Naive thymus-derived CD4-positive, alpha-beta T cell (primary cell): ENCODE measurements at regions of chr11 and their contacts with region 1.

Region 1: DNA sequence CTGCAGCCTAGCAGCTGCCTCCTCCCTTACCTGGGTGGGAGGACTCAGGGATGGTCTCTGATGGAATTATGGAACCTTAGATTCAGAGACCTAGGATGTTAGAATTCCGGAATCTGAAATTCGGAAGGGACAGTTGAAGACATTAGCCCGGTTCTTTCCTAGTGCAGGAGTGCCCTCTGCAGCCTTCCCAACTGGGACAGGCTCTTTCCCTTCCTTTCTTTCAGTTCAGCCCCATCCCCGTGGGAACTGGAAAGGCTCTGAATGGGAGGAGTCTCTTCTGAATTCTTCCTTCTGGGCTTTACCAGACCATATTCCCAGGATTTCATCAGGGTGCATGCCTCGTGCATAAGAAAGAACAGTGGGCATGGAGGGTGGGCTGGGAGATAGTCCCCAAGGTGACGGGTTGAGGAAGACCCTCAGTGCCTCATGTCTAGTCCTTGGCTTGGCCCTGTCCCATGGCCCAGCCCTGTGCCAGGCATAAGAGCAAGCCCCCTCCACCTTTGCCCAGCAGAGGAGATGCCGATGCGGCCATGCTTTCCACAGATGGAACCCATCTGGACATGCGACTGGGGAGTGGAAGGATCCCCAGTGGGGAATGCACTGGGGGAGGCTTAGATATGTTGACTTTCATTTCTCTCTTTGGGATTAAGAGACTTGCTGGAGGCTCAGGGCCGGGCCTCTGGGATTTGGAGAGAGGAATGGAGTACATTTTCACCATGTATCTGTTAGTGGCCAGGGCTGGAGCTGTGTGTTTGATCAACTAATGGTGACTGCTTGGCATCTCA is 14.4 kb downstream of the DNAJB13 start:
- DNase-seq: no peak
- ATAC-seq: no peak
- H3K4me3 ChIP-seq: no peak overlapping the region
- H3K4me3 Mint-ChIP-seq: peak overlapping the region in 5 of 10 donors; percentile 18 to 59 (median 47)
- H3K27ac ChIP-seq: no peak overlapping the region
- H3K27ac Mint-ChIP-seq: peak overlapping the region in 8 of 9 donors; percentile 36 to 86 (median 74)
- H3K4me1 ChIP-seq: peaks cover 41 to 50% of the 10 kb centered on the region in 2 donors
- H3K4me1 Mint-ChIP-seq: peaks cover 29 to 57% (median 44%) of the 10 kb centered on the region in 7 donors
- H3K27me3 ChIP-seq: no peaks in the 10 kb centered on the region
- H3K27me3 Mint-ChIP-seq: no peaks in the 10 kb centered on the region

Region 2: GRCh38 chr11:73889019-73889418 is 76.2 kb before region 1 on chr11:
- CTCF ChIA-PET with region 1: no interaction called
- POLR2A ChIA-PET with region 1: no interaction called
- intact Hi-C with region 1: no loop called
- DNase-seq: no peak
- ATAC-seq: no peak
- H3K4me3 ChIP-seq: no peak overlapping the region
- H3K4me3 Mint-ChIP-seq: no peak overlapping the region
- H3K27ac ChIP-seq: no peak overlapping the region
- H3K27ac Mint-ChIP-seq: peak overlapping the region in 3 of 9 donors; percentile 14 to 32 (median 29)
- H3K4me1 ChIP-seq: no peaks in the 10 kb centered on the region
- H3K4me1 Mint-ChIP-seq: peaks cover 4 to 12% (median 6%) of the 10 kb centered on the region in 7 donors
- H3K27me3 ChIP-seq: no peaks in the 10 kb centered on the region
- H3K27me3 Mint-ChIP-seq: no peaks in the 10 kb centered on the region

Region 3: GRCh38 chr11:74004759-74005615 is 39.7 kb after region 1 on chr11:
- CTCF ChIA-PET with region 1: interaction called, 11 read pairs
- POLR2A ChIA-PET with region 1: interaction called, 1,403 read pairs
- intact Hi-C with region 1: loop called (anchors 1 to 2 kb)
- DNase-seq: peak; percentile 55 to 94 (median 91)
- ATAC-seq: peak; percentile 100
- H3K4me3 ChIP-seq: peak overlapping the region; percentile 44
- H3K4me3 Mint-ChIP-seq: peak overlapping the region; percentile 74 to 91 (median 83)
- H3K27ac ChIP-seq: peak overlapping the region; percentile 75
- H3K27ac Mint-ChIP-seq: peak overlapping the region; percentile 92 to 99 (median 96)
- H3K4me1 ChIP-seq: peaks cover 60 to 62% of the 10 kb centered on the region in 2 donors
- H3K4me1 Mint-ChIP-seq: peaks cover 48 to 85% (median 78%) of the 10 kb centered on the region in 7 donors
- H3K27me3 ChIP-seq: no peaks in the 10 kb centered on the region
- H3K27me3 Mint-ChIP-seq: no peaks in the 10 kb centered on the region

Region 4: DNA sequence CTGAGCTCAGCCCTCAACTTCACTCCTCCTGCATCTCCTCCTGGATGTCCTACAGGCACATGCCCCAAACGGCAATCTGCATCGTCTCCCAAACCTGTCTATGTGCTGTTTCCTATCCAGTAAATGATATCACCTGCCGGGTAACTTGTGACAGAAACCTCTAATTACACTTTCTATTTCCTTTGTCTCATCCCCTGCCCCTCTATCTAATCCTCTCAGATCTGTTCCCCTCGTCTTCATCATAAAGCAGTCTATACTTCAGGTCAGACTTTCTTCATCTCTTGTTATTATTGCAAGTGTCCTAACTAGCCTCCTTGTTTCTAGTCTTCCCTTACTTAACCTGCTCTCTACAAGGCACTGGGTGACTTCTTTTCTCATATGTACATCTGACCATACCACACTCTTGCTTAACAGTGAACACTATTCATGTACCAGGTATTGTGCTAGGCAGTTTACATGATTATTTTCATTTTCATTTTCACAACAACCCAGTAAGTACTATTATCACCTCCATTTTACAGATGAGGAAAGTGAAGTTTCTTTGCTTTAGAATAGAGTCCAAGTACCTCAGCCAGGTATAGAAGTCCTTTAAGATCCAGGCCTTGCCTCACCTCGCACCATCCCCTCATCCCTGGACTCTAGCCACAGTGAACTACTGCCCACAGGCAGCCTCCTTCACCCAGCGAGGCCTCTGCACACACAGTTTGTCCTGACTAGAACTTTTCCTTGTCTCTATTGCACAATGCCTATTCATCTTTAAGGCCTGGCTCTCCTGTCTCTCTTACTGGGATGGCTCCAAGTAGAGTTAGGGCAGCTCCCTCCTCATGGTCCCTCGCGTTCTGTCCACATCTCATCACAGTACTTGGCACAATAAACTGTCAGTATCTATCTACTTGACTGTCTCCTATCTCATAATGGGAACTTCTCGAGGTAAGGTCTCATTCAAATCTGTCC is 65.7 kb after region 1 on chr11:
- CTCF ChIA-PET with region 1: interaction called, 50 read pairs
- POLR2A ChIA-PET with region 1: interaction called, 34 read pairs
- intact Hi-C with region 1: loop called (anchors 1 to 2 kb)
- DNase-seq: no peak
- ATAC-seq: peak; percentile 52
- H3K4me3 ChIP-seq: no peak overlapping the region
- H3K4me3 Mint-ChIP-seq: peak overlapping the region in 6 of 10 donors; percentile 3 to 70 (median 16)
- H3K27ac ChIP-seq: no peak overlapping the region
- H3K27ac Mint-ChIP-seq: peak overlapping the region in 8 of 9 donors; percentile 3 to 91 (median 44)
- H3K4me1 ChIP-seq: peaks cover 0 to 7% of the 10 kb centered on the region in 2 donors
- H3K4me1 Mint-ChIP-seq: peaks cover 17 to 39% (median 25%) of the 10 kb centered on the region in 7 donors
- H3K27me3 ChIP-seq: no peaks in the 10 kb centered on the region
- H3K27me3 Mint-ChIP-seq: no peaks in the 10 kb centered on the region

Region 5: DNA sequence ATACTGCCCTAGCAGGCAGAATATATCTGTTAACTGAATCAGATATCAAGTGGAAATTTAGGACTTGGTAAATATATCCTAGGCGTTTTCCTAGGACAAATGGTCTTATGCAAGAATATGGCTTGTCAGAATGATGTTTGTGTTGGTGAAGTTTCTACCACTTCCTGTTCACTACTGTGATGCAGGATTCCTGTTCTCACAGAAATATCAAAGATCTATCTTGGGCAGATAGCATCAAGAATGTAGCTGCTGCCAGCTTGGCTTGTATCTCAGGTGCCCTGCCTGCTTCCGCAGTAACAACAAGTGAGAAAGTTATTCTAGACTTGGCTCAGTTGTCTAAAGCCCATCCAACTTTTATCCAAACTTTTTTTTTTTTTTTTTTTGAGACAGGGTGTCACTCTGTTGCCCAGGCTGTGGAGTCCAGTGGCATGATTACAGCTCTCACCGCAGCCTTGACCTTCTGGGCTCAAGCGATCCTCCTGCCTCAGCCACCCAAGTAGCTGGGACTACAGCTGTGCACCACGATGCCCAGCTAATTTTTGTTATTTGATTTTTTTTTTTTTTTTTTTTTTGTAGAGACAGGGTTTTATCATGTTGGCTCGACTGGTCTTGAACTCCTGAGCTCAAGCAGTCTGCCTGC is 267.2 kb after region 1 on chr11:
- CTCF ChIA-PET with region 1: no interaction called
- POLR2A ChIA-PET with region 1: no interaction called
- intact Hi-C with region 1: loop called in 1 of 2 experiments (anchors 10 kb)
- DNase-seq: peak in 7 of 9 donors; percentile 24 to 79 (median 68)
- ATAC-seq: peak; percentile 95
- H3K4me3 ChIP-seq: peak overlapping the region; percentile 5
- H3K4me3 Mint-ChIP-seq: peak overlapping the region in 8 of 10 donors; percentile 10 to 71 (median 40)
- H3K27ac ChIP-seq: peak overlapping the region; percentile 69
- H3K27ac Mint-ChIP-seq: peak overlapping the region in 2 of 9 donors; percentile 95 to 96
- H3K4me1 ChIP-seq: peaks cover 22 to 35% of the 10 kb centered on the region in 2 donors
- H3K4me1 Mint-ChIP-seq: peaks cover 7 to 46% (median 26%) of the 10 kb centered on the region in 7 donors
- H3K27me3 ChIP-seq: no peaks in the 10 kb centered on the region
- H3K27me3 Mint-ChIP-seq: no peaks in the 10 kb centered on the region

Region 6: DNA sequence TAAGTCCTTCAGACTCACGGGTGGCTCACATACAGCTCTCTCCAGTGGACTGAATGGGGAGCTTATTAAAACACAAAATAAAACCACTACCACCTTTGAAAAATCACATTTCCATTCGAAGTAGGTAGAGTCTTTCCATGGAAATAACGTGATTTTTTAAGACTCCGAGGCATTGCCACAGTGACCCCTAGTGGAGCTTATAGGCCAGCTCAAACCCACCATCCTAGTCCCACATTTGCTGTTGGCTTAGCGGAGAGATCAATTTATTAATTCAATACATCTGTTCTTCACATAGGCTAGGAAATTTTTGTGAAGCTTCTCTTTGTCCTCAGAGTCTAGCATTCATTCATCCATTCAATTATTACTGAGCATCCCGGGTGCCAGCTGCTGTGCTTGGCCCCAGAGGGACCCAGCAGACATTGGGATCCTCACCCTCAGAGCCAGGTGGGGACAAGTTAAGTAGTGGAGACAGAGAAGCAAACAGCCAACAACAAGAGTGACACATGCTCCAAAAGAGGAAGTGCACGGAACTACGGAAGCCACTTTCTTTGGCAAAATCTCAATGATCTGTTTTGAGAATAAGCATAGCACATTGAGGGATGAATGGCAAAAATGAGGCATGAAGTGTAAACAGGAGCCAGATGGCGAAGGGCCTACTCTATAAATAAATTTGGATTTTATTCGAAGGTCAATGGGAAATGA is 356.4 kb after region 1 on chr11:
- CTCF ChIA-PET with region 1: no interaction called
- POLR2A ChIA-PET with region 1: no interaction called
- intact Hi-C with region 1: loop called in 1 of 2 experiments (anchors 1 kb)
- DNase-seq: peak in 4 of 9 donors; percentile 16 to 33 (median 28)
- ATAC-seq: peak; percentile 49
- H3K4me3 ChIP-seq: no peak overlapping the region
- H3K4me3 Mint-ChIP-seq: no peak overlapping the region
- H3K27ac ChIP-seq: no peak overlapping the region
- H3K27ac Mint-ChIP-seq: no peak overlapping the region
- H3K4me1 ChIP-seq: no peaks in the 10 kb centered on the region
- H3K4me1 Mint-ChIP-seq: peaks cover 0 to 6% (median 0%) of the 10 kb centered on the region in 7 donors
- H3K27me3 ChIP-seq: peaks cover 0 to 3% of the 10 kb centered on the region in 2 donors
- H3K27me3 Mint-ChIP-seq: peaks cover 0 to 22% (median 7%) of the 10 kb centered on the region in 5 donors